CD8-positive, alpha-beta T cell (primary cell): ENCODE measurements at regions of chr19 and their contacts with region 1.

Region 1: DNA sequence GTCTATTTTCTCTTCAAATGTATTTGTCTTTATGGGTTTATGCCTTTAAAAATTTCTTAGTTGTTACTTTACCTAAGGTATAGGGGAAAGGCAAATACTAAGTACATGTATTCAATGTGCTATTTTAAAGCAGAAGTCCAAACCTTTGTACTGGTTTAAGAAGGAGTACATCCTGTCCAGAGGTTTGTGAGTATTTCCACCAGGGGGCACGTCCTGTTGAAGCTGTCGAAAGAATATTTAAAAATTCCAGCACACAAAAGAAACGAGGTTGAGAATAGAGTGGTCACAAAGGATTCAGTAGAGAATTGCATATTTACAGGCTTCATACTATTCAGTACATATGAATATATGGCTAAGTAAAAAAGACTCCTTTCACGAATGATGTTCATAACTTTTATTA is 59.8 kb downstream of the URI1 start:
- DNase-seq: no peak
- ATAC-seq: no peak
- H3K4me3 ChIP-seq: no peak overlapping the region
- H3K4me3 Mint-ChIP-seq: no peak overlapping the region
- H3K27ac ChIP-seq: no peak overlapping the region
- H3K27ac Mint-ChIP-seq: no peak overlapping the region
- H3K4me1 ChIP-seq: peaks cover 15% of the 10 kb centered on the region
- H3K4me1 Mint-ChIP-seq: peaks cover 76% of the 10 kb centered on the region
- H3K27me3 ChIP-seq: no peaks in the 10 kb centered on the region
- H3K27me3 Mint-ChIP-seq: no peaks in the 10 kb centered on the region
- CTCF ChIP-seq: no peak

Region 2: DNA sequence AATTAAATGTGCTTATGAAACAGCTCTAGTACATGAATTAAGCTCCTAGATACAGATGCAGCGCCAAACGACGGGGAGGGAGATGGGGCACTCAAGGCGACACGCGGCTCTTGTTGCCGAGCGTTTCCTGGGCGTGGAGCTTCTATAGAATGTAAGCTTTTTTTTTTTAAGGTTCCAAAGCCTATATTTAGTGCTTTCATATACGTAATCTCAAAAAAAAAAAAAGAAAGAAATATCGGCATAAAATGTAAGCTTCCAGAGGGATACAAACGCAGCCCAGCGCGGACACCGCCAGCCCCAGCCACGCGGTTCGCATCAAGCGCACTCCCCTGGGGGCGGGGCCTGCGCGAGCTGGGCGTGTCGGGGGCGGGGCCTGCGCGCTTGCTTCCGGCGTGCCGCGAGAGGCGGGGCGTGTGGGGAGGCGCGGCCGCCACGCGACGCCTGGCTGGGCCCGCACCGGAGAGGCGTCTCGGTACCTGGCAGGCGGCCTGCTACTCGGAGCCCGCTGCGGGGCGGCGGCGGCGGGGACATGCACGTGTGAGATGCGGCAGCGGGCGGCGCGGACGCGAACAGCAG is 59.9 kb before region 1 on chr19 and contains the start of gene URI1:
- CTCF ChIA-PET with region 1: no interaction called
- POLR2A ChIA-PET with region 1: no interaction called
- intact Hi-C with region 1: no loop called
- DNase-seq: peak; percentile 87 to 98 (median 92)
- ATAC-seq: peak; percentile 92
- H3K4me3 ChIP-seq: peak within 1 kb of the TSS; percentile 81 to 85
- H3K4me3 Mint-ChIP-seq: peak within 1 kb of the TSS; percentile 97
- H3K27ac ChIP-seq: peak within 1 kb of the TSS; percentile 59 to 64
- H3K27ac Mint-ChIP-seq: peak within 1 kb of the TSS; percentile 94
- H3K4me1 ChIP-seq: peaks cover 40% of the 10 kb centered on the region
- H3K4me1 Mint-ChIP-seq: peaks cover 47% of the 10 kb centered on the region
- H3K27me3 ChIP-seq: peaks cover 0 to 2% of the 10 kb centered on the region in 2 experiments
- H3K27me3 Mint-ChIP-seq: peaks cover 3% of the 10 kb centered on the region
- CTCF ChIP-seq: no peak
- total RNA-seq, gene URI1: 51.3 to 56.4 TPM

Region 3: DNA sequence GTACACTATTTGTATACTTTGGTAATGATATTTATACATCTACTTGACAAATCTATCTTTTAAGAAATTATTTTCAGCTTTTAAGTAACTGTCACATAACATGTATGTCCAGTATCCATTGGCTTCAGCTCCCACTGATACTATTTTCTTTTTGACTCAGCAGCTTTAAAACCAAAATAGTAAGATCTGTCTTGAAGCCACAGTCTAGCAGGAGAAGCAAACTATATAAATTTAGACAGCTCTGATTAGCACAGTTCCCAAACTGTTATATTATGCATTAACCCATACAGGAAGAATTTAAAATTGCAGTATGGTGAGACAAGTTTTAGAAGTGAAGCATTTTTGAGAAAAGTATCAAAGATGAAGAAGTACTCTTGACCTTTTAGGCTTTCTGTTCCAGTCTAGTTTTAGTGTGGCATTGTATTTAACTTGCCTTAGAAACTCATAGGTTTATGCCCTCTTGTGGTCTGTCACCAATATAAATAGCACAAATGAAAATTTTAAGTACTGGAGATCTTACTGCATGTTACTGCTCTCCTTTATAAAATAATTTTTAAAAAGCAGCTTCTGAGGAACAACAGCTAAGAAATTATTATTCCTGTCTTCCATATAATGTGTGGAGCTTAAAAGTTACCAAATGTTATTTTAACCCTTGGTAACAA is 35.1 kb before region 1 on chr19:
- CTCF ChIA-PET with region 1: no interaction called
- POLR2A ChIA-PET with region 1: no interaction called
- intact Hi-C with region 1: loop called in 1 of 2 experiments (anchors 5 kb)
- DNase-seq: peak in 2 of 9 experiments; percentile 18 to 35
- ATAC-seq: no peak
- H3K4me3 ChIP-seq: no peak overlapping the region
- H3K4me3 Mint-ChIP-seq: peak overlapping the region; percentile 32
- H3K27ac ChIP-seq: no peak overlapping the region
- H3K27ac Mint-ChIP-seq: peak overlapping the region; percentile 72
- H3K4me1 ChIP-seq: peaks cover 68% of the 10 kb centered on the region
- H3K4me1 Mint-ChIP-seq: peaks cover 86% of the 10 kb centered on the region
- H3K27me3 ChIP-seq: no peaks in the 10 kb centered on the region
- H3K27me3 Mint-ChIP-seq: no peaks in the 10 kb centered on the region
- CTCF ChIP-seq: peak; percentile 29

Region 4: GRCh38 chr19:30340771-30341561 is 339.2 kb after region 1 on chr19:
- CTCF ChIA-PET with region 1: no interaction called
- POLR2A ChIA-PET with region 1: no interaction called
- intact Hi-C with region 1: no loop called
- DNase-seq: no peak
- ATAC-seq: no peak
- H3K4me3 ChIP-seq: no peak overlapping the region
- H3K4me3 Mint-ChIP-seq: no peak overlapping the region
- H3K27ac ChIP-seq: no peak overlapping the region
- H3K27ac Mint-ChIP-seq: no peak overlapping the region
- H3K4me1 ChIP-seq: no peaks in the 10 kb centered on the region
- H3K4me1 Mint-ChIP-seq: no peaks in the 10 kb centered on the region
- H3K27me3 ChIP-seq: no peaks in the 10 kb centered on the region
- H3K27me3 Mint-ChIP-seq: no peaks in the 10 kb centered on the region
- CTCF ChIP-seq: no peak